ENCODE measurements at regions of chrX and their contacts with region 1.

Region 1: GRCh38 chrX:101407748-101408531 is at the starts of genes GLA and HNRNPH2:
- DNase-seq: peak; percentile 91
- ATAC-seq: peak; percentile 94
- H3K4me3 Mint-ChIP-seq: peak within 1 kb of the TSS; percentile 97
- H3K27ac Mint-ChIP-seq: peak within 1 kb of the TSS; percentile 97
- H3K4me1 Mint-ChIP-seq: peaks cover 26% of the 10 kb centered on the region
- H3K27me3 Mint-ChIP-seq: no peaks in the 10 kb centered on the region
- total RNA-seq, gene GLA: 32.6 to 42.2 TPM
- total RNA-seq, gene HNRNPH2: 18.6 to 26.9 TPM

Region 2: GRCh38 chrX:100819837-100820666 is 587.9 kb before region 1 on chrX and contains the start of gene CSTF2:
- CTCF ChIA-PET with region 1: no interaction called
- POLR2A ChIA-PET with region 1: no interaction called
- intact Hi-C with region 1: loop called in 1 of 2 experiments (anchors 5 kb)
- DNase-seq: peak; percentile 89
- ATAC-seq: peak; percentile 98
- H3K4me3 Mint-ChIP-seq: peak within 1 kb of the TSS; percentile 93
- H3K27ac Mint-ChIP-seq: peak within 1 kb of the TSS; percentile 99
- H3K4me1 Mint-ChIP-seq: peaks cover 8% of the 10 kb centered on the region
- H3K27me3 Mint-ChIP-seq: peaks cover 2% of the 10 kb centered on the region
- total RNA-seq, gene CSTF2: 53.8 to 54.3 TPM

Region 3: GRCh38 chrX:100871583-100872560 is 536.1 kb before region 1 on chrX:
- CTCF ChIA-PET with region 1: no interaction called
- POLR2A ChIA-PET with region 1: no interaction called
- intact Hi-C with region 1: no loop called
- DNase-seq: no peak
- ATAC-seq: no peak
- H3K4me3 Mint-ChIP-seq: no peak overlapping the region
- H3K27ac Mint-ChIP-seq: no peak overlapping the region
- H3K4me1 Mint-ChIP-seq: no peaks in the 10 kb centered on the region
- H3K27me3 Mint-ChIP-seq: no peaks in the 10 kb centered on the region

Region 4: DNA sequence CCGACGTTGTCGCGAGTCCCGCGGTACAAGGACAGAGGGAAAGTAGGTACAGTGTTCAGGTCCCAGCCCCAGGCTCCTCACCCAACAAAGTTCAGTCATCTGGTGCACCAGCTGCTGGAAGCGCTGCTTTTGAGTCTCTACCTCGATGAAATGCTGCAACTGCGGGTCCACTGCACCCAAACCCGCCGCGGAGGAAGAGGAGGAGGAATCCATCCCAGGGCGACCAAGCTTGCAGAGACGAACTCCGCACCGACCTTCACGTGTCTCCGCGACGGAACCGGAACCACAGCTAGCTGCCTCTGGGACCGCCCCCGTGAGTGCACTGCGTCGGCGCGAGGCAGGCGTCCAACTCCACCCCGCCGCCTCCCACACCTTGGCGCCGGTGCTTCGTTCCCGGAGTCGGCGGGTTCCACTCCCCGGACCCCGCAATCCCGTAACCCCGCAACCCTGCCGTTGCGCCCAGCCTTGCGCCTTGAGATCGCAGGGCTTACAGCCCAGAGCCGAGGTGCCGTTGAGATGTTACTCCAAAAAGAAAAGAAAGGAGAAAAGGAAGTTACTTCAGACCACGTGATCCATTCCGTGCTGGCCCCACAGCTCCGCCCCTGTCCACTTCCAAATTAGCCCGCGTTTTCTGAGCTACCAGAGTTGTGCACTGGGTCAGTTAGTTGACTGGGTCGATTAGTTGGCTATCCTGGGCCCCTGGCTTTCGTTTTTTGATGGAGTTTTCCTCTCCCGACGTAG is 59.3 kb before region 1 on chrX and contains the start of gene TIMM8A:
- CTCF ChIA-PET with region 1: no interaction called
- POLR2A ChIA-PET with region 1: no interaction called
- intact Hi-C with region 1: loop called (anchors 1 kb)
- DNase-seq: peak; percentile 88
- ATAC-seq: peak; percentile 98
- H3K4me3 Mint-ChIP-seq: peak within 1 kb of the TSS; percentile 85
- H3K27ac Mint-ChIP-seq: peak within 1 kb of the TSS; percentile 93
- H3K4me1 Mint-ChIP-seq: peaks cover 9% of the 10 kb centered on the region
- H3K27me3 Mint-ChIP-seq: no peaks in the 10 kb centered on the region
- total RNA-seq, gene TIMM8A: 12.8 to 23.8 TPM

Region 5: DNA sequence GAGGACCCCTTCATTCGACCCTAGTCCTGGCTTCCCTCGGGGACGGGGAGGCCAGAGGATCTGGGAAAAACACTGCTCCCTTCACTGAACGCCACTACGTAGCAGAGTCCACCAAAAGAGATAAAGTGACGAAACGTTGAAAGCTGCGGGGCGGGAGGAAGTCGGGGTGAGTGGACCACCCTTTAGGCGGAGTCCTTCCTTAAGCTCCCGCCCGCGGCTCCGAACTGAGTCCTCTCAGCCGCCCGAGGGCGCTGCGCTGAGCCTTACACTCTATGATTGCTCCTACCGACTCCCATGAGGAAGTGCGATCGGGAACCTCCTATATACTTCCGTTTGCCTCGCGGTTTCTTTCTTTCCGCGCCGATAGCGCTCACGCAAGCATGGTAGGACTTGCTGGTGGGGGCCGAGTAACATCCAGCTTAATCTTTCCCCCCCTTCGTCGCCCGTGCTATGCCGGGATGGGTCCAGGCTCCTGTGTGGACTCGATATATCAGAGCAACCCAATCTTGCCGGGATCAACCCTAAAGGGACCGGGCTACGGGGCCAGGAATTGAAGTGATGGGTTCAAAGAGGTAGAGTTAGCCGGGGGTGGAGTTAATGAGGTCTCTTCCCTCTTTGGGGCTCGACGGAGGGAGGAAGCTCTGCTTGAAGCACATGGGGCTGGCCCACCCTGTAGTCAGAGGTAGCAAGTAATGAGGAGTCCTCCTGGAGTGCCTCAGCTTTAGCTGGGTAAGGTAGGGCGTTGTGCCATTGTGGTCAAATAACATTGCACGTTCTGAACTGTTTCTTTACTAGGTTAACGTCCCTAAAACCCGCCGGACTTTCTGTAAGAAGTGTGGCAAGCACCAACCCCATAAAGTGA is 17.0 kb before region 1 on chrX and contains the start of gene RPL36A:
- CTCF ChIA-PET with region 1: interaction called, 6 read pairs
- POLR2A ChIA-PET with region 1: interaction called, 9 read pairs
- intact Hi-C with region 1: loop called (anchors 1 kb)
- DNase-seq: peak; percentile 90
- ATAC-seq: peak; percentile 97
- H3K4me3 Mint-ChIP-seq: peak within 1 kb of the TSS; percentile 95
- H3K27ac Mint-ChIP-seq: peak within 1 kb of the TSS; percentile 96
- H3K4me1 Mint-ChIP-seq: peaks cover 6% of the 10 kb centered on the region
- H3K27me3 Mint-ChIP-seq: peaks cover 3% of the 10 kb centered on the region
- total RNA-seq, gene RPL36A: 340 to 709 TPM

Region 6: DNA sequence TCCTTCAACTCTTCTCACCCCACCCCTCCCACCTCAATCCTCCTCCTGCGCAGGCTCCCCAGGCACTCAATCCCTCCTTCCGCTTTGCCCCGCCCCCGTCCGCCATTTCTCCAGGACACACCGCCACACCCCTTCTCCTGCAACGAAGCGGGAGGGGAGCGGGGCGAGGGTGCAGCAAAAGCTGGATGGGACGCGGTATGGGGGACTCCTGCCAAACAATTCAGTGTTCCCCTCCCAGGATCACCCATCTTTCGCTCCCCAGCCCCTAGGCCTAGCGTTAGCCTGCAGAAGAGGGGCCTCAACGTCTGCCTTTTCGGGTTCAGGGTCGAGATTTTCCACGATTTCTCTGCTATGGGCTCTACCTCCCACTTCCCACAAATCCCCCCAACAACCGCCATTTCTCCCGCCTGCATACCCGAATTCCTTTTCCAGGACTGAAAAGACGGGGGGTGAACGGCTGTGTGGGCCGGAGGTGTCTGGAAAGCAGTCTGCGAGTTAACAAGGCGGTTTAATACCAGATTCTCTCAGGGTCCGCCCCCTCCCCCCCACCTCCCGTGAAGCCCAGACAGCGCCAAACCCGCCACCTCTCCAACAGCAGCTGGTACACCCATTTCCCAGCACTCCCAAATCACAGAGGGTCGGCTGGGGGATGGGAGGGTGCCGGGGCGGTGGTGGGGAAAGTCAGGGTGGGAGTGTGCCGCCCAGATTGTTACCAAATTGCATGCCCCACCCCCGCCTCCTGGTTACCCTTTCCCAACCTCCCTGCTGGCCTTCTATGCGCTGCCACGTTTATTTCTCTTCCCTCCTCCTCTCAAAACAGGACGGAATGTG is 250.9 kb after region 1 on chrX:
- CTCF ChIA-PET with region 1: no interaction called
- POLR2A ChIA-PET with region 1: no interaction called
- intact Hi-C with region 1: loop called in 1 of 2 experiments (anchors 2 kb)
- DNase-seq: peak; percentile 81
- ATAC-seq: peak; percentile 90
- H3K4me3 Mint-ChIP-seq: peak overlapping the region; percentile 77
- H3K27ac Mint-ChIP-seq: peak overlapping the region; percentile 47
- H3K4me1 Mint-ChIP-seq: peaks cover 22% of the 10 kb centered on the region
- H3K27me3 Mint-ChIP-seq: no peaks in the 10 kb centered on the region

Region 7: GRCh38 chrX:101813200-101813599 is 405.3 kb after region 1 on chrX:
- CTCF ChIA-PET with region 1: no interaction called
- POLR2A ChIA-PET with region 1: no interaction called
- intact Hi-C with region 1: no loop called
- DNase-seq: no peak
- ATAC-seq: no peak
- H3K4me3 Mint-ChIP-seq: no peak overlapping the region
- H3K27ac Mint-ChIP-seq: no peak overlapping the region
- H3K4me1 Mint-ChIP-seq: no peaks in the 10 kb centered on the region
- H3K27me3 Mint-ChIP-seq: no peaks in the 10 kb centered on the region

Region 8: DNA sequence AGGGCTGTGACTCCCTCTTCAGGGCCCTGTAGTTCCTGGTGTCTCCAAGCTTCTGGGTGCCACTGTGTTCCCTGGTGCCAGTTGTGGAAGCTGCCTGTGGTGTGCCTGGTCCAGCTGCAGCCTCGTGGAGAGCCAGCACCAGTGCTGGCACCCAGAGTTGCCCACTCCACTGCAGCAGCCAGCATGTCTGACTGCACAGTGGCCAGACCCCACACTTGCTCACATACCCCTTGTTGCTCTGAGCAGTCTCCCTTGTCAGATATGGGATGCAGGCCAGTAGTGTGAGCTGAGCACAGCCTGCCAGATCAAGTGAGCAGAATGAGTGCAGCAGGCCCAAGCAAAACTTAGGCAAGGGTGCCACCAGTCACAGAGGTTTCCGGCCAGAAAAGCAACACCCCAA is 415.3 kb after region 1 on chrX:
- CTCF ChIA-PET with region 1: no interaction called
- POLR2A ChIA-PET with region 1: no interaction called
- intact Hi-C with region 1: no loop called
- DNase-seq: no peak
- ATAC-seq: no peak
- H3K4me3 Mint-ChIP-seq: no peak overlapping the region
- H3K27ac Mint-ChIP-seq: no peak overlapping the region
- H3K4me1 Mint-ChIP-seq: no peaks in the 10 kb centered on the region
- H3K27me3 Mint-ChIP-seq: peaks cover 5% of the 10 kb centered on the region

Region 9: GRCh38 chrX:102535958-102536357 is 1128.0 kb after region 1 on chrX:
- CTCF ChIA-PET with region 1: no interaction called
- POLR2A ChIA-PET with region 1: no interaction called
- intact Hi-C with region 1: no loop called
- DNase-seq: no peak
- ATAC-seq: no peak
- H3K4me3 Mint-ChIP-seq: no peak overlapping the region
- H3K27ac Mint-ChIP-seq: no peak overlapping the region
- H3K4me1 Mint-ChIP-seq: no peaks in the 10 kb centered on the region
- H3K27me3 Mint-ChIP-seq: peaks cover 8% of the 10 kb centered on the region

Measured in activated CD4-positive, alpha-beta T cell treated with anti-CD3 and anti-CD28 coated beads for 36 hours (primary cell).